Natural killer cell (primary cell): ENCODE measurements at regions of chr17 and their contacts with region 1.

Region 1: DNA sequence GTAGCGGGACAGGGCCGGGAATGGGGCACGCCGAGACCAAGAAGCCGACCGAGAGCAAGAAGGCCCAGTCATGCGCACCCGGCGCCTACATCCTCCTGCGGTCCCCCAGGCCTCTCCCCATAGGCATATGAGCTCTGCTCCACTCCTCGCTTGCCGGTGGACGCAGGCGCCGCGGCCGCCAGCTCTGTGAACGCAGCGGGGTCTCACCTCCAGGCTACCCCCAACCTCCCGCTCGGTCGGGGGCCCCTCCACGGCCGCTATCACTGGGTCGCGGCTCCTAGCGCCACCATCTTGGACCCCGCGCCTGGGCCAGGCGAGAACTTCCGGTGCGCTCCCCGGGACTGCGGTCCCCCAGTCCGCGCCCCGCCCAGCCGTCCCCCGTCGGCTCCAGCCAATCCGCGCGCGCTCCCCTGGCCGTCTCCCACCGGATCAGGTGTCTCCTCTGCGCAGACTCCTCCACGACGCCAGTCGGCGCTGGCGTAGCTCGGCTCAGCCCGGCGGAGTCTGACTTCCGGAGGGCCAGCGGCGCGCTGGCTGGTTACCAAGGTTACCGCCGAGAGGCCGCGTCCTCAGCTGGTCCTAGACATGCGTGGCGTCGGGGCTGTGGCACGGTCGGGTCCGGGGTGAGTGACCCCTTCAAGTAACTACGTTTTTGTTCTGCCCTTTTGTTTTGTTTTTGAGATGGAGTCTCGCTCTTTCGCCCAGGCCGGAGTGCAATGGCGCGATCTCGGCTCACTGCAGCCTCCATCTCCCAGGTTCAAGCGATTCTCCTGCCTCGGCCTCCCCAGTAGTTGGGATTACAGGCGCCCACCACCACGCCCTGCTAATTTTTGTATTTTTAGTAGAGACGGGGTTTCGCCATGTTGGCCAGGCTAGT is at the start of gene ZNF594:
- DNase-seq: peak; percentile 97
- ATAC-seq: peak; percentile 98 to 99 (median 98)
- H3K4me3 ChIP-seq: peak within 1 kb of the TSS; percentile 90
- H3K4me3 Mint-ChIP-seq: peak within 1 kb of the TSS; percentile 95
- H3K27ac ChIP-seq: peak within 1 kb of the TSS; percentile 86
- H3K27ac Mint-ChIP-seq: peak within 1 kb of the TSS; percentile 91 to 98
- H3K4me1 ChIP-seq: peaks cover 23% of the 10 kb centered on the region
- H3K4me1 Mint-ChIP-seq: peaks cover 35 to 36% of the 10 kb centered on the region in 2 donors
- H3K27me3 ChIP-seq: no peaks in the 10 kb centered on the region
- H3K27me3 Mint-ChIP-seq: no peaks in the 10 kb centered on the region
- CTCF ChIP-seq: peak; percentile 74
- total RNA-seq, gene ZNF594: 5.1 to 7.9 (median 6.1) TPM

Region 2: DNA sequence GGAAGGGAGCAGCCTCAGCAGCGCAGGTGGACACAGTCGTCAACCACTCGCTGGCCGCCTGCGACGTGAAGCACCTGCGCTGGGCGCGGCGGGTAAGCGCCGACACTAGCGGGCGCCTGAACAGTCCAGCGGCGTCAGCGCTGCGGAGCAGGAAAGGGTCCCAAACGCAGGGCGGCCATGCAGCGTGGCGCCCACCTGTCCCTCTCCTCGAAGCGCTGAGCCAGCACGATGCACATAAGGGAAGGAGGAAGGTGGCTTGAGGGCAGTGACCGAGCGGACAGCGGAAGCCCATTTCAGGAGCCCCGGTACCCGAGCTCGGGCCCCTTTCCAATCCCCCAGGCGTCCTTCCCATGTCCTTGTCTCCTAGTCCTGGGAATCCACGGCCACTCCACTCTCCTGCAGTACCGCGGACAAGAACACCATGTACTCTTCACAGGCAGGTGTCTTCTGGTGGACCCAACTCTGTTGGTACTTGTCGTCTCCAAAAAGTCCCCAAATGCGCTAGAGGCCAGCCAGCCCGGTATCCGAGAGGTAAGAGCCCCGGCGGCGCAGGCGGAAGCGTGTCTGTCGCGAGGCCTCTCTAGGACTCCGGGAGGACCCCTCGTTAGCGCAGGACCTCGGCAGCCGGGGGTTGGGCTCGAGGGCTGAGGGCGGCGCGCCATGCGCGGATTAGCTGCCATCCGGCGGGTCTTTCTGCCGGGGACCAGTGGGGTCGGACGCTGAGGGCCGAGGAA is 94.5 kb before region 1 on chr17:
- intact Hi-C with region 1: loop called (anchors 10 kb)
- DNase-seq: peak; percentile 46 to 65
- ATAC-seq: peak; percentile 81 to 97 (median 97)
- H3K4me3 ChIP-seq: peak overlapping the region; percentile 56
- H3K4me3 Mint-ChIP-seq: peak overlapping the region; percentile 90
- H3K27ac ChIP-seq: no peak overlapping the region
- H3K27ac Mint-ChIP-seq: peak overlapping the region; percentile 43 to 76
- H3K4me1 ChIP-seq: peaks cover 9% of the 10 kb centered on the region
- H3K4me1 Mint-ChIP-seq: peaks cover 12 to 13% of the 10 kb centered on the region in 2 donors
- H3K27me3 ChIP-seq: peaks cover 7% of the 10 kb centered on the region
- H3K27me3 Mint-ChIP-seq: peaks cover 9 to 19% of the 10 kb centered on the region in 2 donors
- CTCF ChIP-seq: no peak

Region 3: GRCh38 chr17:5237541-5238016 is 45.8 kb after region 1 on chr17:
- intact Hi-C with region 1: loop called (anchors 2 kb)
- DNase-seq: peak; percentile 63 to 69
- ATAC-seq: peak; percentile 76 to 87 (median 80)
- H3K4me3 ChIP-seq: no peak overlapping the region
- H3K4me3 Mint-ChIP-seq: peak overlapping the region; percentile 52
- H3K27ac ChIP-seq: peak overlapping the region; percentile 75
- H3K27ac Mint-ChIP-seq: peak overlapping the region; percentile 91 to 96
- H3K4me1 ChIP-seq: peaks cover 82% of the 10 kb centered on the region
- H3K4me1 Mint-ChIP-seq: peaks cover 63 to 68% of the 10 kb centered on the region in 2 donors
- H3K27me3 ChIP-seq: no peaks in the 10 kb centered on the region
- H3K27me3 Mint-ChIP-seq: no peaks in the 10 kb centered on the region
- CTCF ChIP-seq: peak; percentile 35

Region 4: GRCh38 chr17:5419356-5419958 is 227.7 kb after region 1 on chr17 and contains the start of gene NUP88:
- intact Hi-C with region 1: loop called (anchors 1 kb)
- DNase-seq: peak; percentile 95 to 98
- ATAC-seq: peak; percentile 87 to 96 (median 91)
- H3K4me3 ChIP-seq: peak within 1 kb of the TSS; percentile 93
- H3K4me3 Mint-ChIP-seq: peak within 1 kb of the TSS; percentile 99
- H3K27ac ChIP-seq: peak within 1 kb of the TSS; percentile 97
- H3K27ac Mint-ChIP-seq: peak within 1 kb of the TSS; percentile 97
- H3K4me1 ChIP-seq: peaks cover 26% of the 10 kb centered on the region
- H3K4me1 Mint-ChIP-seq: peaks cover 25 to 27% of the 10 kb centered on the region in 2 donors
- H3K27me3 ChIP-seq: no peaks in the 10 kb centered on the region
- H3K27me3 Mint-ChIP-seq: no peaks in the 10 kb centered on the region
- CTCF ChIP-seq: no peak
- total RNA-seq, gene NUP88: 112 to 136 (median 125) TPM

Region 5: GRCh38 chr17:5438716-5439445 is 247.1 kb after region 1 on chr17 and contains the start of gene C1QBP:
- intact Hi-C with region 1: loop called (anchors 2 kb)
- DNase-seq: peak; percentile 95 to 97
- ATAC-seq: peak; percentile 93 to 98 (median 95)
- H3K4me3 ChIP-seq: peak within 1 kb of the TSS; percentile 51
- H3K4me3 Mint-ChIP-seq: peak within 1 kb of the TSS; percentile 81
- H3K27ac ChIP-seq: peak within 1 kb of the TSS; percentile 70
- H3K27ac Mint-ChIP-seq: peak within 1 kb of the TSS; percentile 81 to 92
- H3K4me1 ChIP-seq: peaks cover 13% of the 10 kb centered on the region
- H3K4me1 Mint-ChIP-seq: peaks cover 19 to 27% of the 10 kb centered on the region in 2 donors
- H3K27me3 ChIP-seq: no peaks in the 10 kb centered on the region
- H3K27me3 Mint-ChIP-seq: no peaks in the 10 kb centered on the region
- CTCF ChIP-seq: peak; percentile 97
- total RNA-seq, gene C1QBP: 38.1 to 40.8 (median 40.0) TPM